Sigmoid colon (tissue), 7 donors: ENCODE measurements at regions of chr6 and their contacts with region 1.

Region 1: DNA sequence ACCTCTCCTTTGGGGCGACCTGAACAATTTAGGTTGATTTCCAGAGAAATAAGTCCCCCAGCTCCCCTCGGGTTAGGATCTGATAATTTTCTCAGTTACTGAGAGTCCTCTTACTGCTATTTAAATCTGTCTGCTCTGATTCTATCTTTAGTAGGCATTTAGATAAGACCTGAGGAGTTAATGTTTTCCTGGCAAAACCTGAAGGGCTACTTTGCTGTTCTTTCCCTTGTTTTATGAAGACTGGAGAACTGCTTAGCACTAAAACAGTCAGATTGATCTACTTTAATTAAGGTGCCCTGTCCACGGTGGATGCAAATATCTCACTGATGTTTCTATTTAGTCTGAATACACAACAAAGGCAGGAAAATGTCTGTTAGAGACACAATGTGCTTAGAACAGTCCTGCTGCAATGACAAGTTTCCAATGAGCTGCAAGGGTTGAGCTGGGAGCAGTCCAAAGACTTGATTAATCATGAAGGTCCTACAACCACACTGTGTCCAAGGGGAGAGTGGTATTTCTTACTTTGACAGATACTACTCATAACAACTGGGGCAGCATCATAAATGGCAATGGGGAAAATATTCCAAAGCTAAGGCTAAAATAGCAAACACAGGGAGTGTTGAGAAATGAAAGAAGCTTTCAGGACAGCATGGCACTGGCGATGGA is 15.7 kb downstream of the ADTRP start:
- DNase-seq: no peak
- H3K4me3 ChIP-seq: no peak overlapping the region
- H3K27ac ChIP-seq: peak overlapping the region; percentile 55 to 80 (median 65)
- H3K4me1 ChIP-seq: peaks cover 0 to 53% (median 37%) of the 10 kb centered on the region in 4 donors
- H3K27me3 ChIP-seq: no peaks in the 10 kb centered on the region
- CTCF ChIP-seq: no peak
- EP300 ChIP-seq: no peak
- POLR2A ChIP-seq: no peak

Region 2: GRCh38 chr6:11575408-11576033 is 187.4 kb before region 1 on chr6:
- intact Hi-C with region 1: no loop called
- DNase-seq: peak; percentile 77
- H3K4me3 ChIP-seq: no peak overlapping the region
- H3K27ac ChIP-seq: no peak overlapping the region
- H3K4me1 ChIP-seq: no peaks in the 10 kb centered on the region
- H3K27me3 ChIP-seq: no peaks in the 10 kb centered on the region
- CTCF ChIP-seq: peak; percentile 62 to 85 (median 76)
- EP300 ChIP-seq: no peak
- POLR2A ChIP-seq: no peak

Region 3: DNA sequence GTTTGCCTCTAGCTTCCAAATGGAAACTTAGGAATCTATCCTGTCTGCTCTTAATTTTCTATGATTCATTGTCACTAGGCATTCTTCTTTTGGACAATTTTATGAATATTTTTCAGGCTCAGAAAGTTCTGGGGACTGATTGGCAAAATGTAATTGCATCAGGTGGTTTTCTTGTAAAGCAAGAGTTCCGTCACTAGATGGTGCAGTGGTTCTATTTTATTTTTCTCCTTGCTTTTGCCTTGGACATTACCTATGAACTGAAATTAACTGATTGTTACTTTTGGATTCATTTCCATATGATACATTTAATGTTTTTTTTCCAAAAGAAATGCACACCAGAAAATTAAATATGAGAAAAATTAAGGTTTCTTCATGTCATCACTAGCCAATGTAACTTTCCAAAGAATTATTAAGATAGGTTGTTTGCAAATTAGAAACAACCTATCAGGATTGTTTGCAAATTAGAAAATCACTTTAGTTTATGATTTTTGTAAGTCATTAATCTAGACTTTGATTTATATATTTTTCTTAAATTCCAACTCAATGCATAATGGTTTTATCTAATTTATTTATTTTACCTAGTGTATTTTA is 177.4 kb before region 1 on chr6:
- intact Hi-C with region 1: loop called (anchors 5 kb)
- DNase-seq: no peak
- H3K4me3 ChIP-seq: no peak overlapping the region
- H3K27ac ChIP-seq: peak overlapping the region in 1 of 4 donors; percentile 37
- H3K4me1 ChIP-seq: peaks cover 0 to 24% (median 17%) of the 10 kb centered on the region in 4 donors
- H3K27me3 ChIP-seq: no peaks in the 10 kb centered on the region
- CTCF ChIP-seq: peak in 3 of 4 experiments; percentile 42 to 47 (median 45)
- EP300 ChIP-seq: no peak
- POLR2A ChIP-seq: no peak